ENCODE measurements at regions of chr5 and their contacts with region 1.

Region 1: GRCh38 chr5:88845081-88845697 is 37.8 kb downstream of the MEF2C start:
- DNase-seq: no peak
- ATAC-seq: peak; percentile 79
- H3K4me3 Mint-ChIP-seq: peak overlapping the region; percentile 71
- H3K27ac Mint-ChIP-seq: peak overlapping the region; percentile 89
- H3K4me1 Mint-ChIP-seq: peaks cover 75% of the 10 kb centered on the region
- H3K27me3 Mint-ChIP-seq: no peaks in the 10 kb centered on the region
- CTCF ChIP-seq: no peak

Region 2: DNA sequence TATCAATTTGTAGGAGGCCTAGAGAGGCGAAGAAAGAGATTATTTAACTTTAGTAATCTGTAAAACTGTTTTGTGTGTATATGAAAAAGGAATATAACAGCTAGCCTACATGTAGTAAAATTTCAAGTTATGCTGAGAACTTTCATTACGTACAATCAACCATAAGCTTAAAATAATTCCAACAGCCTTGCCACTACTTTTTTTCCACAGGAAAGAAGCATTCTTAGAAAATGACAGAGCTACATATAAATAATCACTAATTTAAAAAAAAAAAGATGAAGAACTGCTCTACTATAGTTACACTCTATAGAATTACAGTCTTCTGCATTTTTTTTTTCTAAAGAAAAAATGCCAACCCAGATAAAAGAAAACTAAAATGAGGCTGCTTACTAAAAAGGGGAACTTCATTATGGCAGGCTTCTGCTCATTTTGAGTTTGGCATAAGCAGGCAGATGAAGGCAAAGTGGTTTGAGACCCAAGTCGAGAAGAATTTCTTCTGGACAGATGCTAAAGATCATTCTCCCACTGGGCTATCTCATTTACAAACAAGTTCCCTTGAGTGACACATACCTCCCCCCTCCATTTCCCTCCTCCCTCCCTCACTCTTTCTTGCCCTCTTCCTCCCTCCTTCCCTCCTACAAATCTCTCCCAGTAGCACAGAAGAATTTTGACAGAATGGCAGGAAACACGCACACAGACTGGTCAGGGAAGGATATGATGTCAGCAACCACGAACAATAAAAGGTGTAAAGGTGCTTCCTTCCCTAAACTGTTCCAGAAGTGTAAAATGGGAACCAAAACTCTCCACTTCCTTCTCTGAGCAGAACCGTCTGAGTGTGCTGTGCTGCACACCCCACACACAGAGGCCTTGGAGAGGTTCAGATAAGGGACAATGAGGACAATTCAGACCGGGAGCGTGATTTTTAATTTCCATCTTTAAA is 18.3 kb before region 1 on chr5:
- CTCF ChIA-PET with region 1: interaction called, 3 read pairs
- POLR2A ChIA-PET with region 1: interaction called, 16 read pairs
- intact Hi-C with region 1: loop called (anchors 1 kb)
- DNase-seq: peak; percentile 31
- ATAC-seq: peak; percentile 77
- H3K4me3 Mint-ChIP-seq: peak overlapping the region; percentile 72
- H3K27ac Mint-ChIP-seq: peak overlapping the region; percentile 91
- H3K4me1 Mint-ChIP-seq: peaks cover 93% of the 10 kb centered on the region
- H3K27me3 Mint-ChIP-seq: no peaks in the 10 kb centered on the region
- CTCF ChIP-seq: no peak

Region 3: DNA sequence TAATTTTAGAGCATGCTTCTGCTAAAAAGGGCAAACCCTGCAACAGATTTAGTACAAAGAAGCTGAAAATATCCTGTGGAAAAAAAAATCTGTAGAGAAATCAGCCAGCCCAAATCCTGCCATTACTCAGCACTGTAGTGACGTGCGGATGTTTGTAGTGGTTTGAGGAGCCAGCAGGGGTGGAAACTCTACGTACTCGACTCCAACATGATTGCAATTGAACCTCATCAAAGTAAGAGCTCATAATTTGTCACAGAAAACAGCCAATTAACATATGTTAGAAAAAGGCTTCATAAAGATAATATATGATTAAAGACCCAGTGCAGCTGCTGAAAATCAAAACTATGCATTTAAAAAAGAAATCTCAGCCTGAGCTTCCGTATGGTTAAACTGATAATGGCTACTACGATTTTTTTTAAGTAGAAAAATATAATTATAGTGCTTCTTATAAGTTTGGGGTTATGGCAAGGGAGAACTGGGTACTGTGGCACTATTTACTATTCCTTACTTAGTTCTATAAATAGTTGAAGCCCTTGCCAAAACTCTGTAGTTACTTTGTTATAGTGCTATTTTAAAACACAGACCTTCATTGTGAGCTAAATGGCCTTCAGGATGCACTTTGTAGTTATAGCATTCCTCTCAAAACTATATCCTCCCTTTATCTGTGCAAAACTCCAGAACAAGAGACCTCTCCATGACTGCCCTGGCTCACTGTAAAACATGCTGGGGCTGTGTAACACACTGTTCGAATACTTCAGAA is 11.6 kb before region 1 on chr5:
- CTCF ChIA-PET with region 1: interaction called, 3 read pairs
- POLR2A ChIA-PET with region 1: interaction called, 16 read pairs
- intact Hi-C with region 1: loop called (anchors 1 kb)
- DNase-seq: no peak
- ATAC-seq: peak; percentile 69
- H3K4me3 Mint-ChIP-seq: peak overlapping the region; percentile 66
- H3K27ac Mint-ChIP-seq: peak overlapping the region; percentile 87
- H3K4me1 Mint-ChIP-seq: peaks cover 81% of the 10 kb centered on the region
- H3K27me3 Mint-ChIP-seq: no peaks in the 10 kb centered on the region
- CTCF ChIP-seq: no peak

Region 4: DNA sequence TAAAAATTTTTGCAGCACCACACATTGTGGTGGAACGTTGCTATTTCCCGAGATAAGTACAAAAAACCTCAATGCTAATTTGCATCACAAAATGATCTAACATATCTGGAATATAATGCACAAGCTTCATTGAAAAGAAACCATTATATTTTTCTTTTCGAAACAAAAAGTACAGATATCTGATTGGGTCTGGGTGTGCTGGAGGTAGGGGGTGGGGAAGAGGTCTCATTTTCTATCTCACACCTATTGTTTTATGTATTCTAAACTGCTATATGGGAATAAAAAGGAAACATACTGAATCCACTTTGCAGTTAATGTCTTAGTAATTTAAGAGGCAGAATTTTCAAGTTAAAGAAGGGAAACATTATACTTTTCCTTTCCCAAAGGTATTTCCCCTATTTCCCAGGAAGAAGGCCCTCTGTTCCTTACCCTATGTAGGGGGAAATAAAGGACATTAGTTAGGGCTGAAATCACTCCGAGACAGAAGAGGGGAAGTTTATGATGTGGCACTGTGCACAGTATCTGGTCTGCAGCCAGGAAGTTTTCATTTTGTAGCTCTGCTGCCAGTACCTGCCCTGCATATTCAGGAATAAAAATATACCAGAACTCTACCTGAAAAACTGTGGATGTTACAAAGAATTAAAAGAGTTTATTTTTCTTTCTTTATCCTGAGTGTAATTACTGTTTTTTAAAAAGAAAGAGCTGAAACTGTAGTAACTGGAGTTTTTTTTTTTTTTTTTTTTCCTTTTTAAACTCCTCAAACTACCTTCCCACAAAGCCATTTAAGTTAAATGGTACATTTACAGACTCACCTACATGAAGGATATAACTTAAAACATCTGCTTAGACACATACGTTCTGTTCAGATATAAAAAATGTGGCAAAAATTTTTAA is 30.4 kb after region 1 on chr5:
- CTCF ChIA-PET with region 1: no interaction called
- POLR2A ChIA-PET with region 1: interaction called, 4 read pairs
- intact Hi-C with region 1: loop called (anchors 1 kb)
- DNase-seq: no peak
- ATAC-seq: peak; percentile 45
- H3K4me3 Mint-ChIP-seq: peak overlapping the region; percentile 63
- H3K27ac Mint-ChIP-seq: peak overlapping the region; percentile 68
- H3K4me1 Mint-ChIP-seq: peaks cover 68% of the 10 kb centered on the region
- H3K27me3 Mint-ChIP-seq: no peaks in the 10 kb centered on the region
- CTCF ChIP-seq: no peak